Activated CD8-positive, alpha-beta T cell treated with anti-CD3 and anti-CD28 coated beads for 36 hours (primary cell): ENCODE measurements at regions of chr16 and their contacts with region 1.

Region 1: GRCh38 chr16:11255737-11256660 is at the start of gene SOCS1:
- DNase-seq: peak; percentile 87
- ATAC-seq: peak; percentile 65
- H3K4me3 Mint-ChIP-seq: peak within 1 kb of the TSS; percentile 97
- H3K27ac Mint-ChIP-seq: peak within 1 kb of the TSS; percentile 94
- H3K4me1 Mint-ChIP-seq: peaks cover 41% of the 10 kb centered on the region
- H3K27me3 Mint-ChIP-seq: no peaks in the 10 kb centered on the region
- CTCF ChIP-seq: peak; percentile 84
- total RNA-seq, gene SOCS1: 75.7 to 75.8 TPM

Region 2: GRCh38 chr16:10981697-10982216 is 274.2 kb before region 1 on chr16:
- CTCF ChIA-PET with region 1: interaction called, 10 read pairs
- POLR2A ChIA-PET with region 1: interaction called, 11 read pairs
- intact Hi-C with region 1: no loop called
- DNase-seq: peak; percentile 69
- ATAC-seq: peak; percentile 94
- H3K4me3 Mint-ChIP-seq: no peak overlapping the region
- H3K27ac Mint-ChIP-seq: no peak overlapping the region
- H3K4me1 Mint-ChIP-seq: peaks cover 16% of the 10 kb centered on the region
- H3K27me3 Mint-ChIP-seq: no peaks in the 10 kb centered on the region
- CTCF ChIP-seq: peak; percentile 55

Region 3: GRCh38 chr16:11094072-11094856 is 161.7 kb before region 1 on chr16:
- CTCF ChIA-PET with region 1: interaction called, 5 read pairs
- POLR2A ChIA-PET with region 1: interaction called, 147 read pairs
- intact Hi-C with region 1: loop called (anchors 5 kb)
- DNase-seq: peak; percentile 88
- ATAC-seq: peak; percentile 74
- H3K4me3 Mint-ChIP-seq: peak overlapping the region; percentile 46
- H3K27ac Mint-ChIP-seq: peak overlapping the region; percentile 97
- H3K4me1 Mint-ChIP-seq: peaks cover 67% of the 10 kb centered on the region
- H3K27me3 Mint-ChIP-seq: no peaks in the 10 kb centered on the region
- CTCF ChIP-seq: no peak

Region 4: DNA sequence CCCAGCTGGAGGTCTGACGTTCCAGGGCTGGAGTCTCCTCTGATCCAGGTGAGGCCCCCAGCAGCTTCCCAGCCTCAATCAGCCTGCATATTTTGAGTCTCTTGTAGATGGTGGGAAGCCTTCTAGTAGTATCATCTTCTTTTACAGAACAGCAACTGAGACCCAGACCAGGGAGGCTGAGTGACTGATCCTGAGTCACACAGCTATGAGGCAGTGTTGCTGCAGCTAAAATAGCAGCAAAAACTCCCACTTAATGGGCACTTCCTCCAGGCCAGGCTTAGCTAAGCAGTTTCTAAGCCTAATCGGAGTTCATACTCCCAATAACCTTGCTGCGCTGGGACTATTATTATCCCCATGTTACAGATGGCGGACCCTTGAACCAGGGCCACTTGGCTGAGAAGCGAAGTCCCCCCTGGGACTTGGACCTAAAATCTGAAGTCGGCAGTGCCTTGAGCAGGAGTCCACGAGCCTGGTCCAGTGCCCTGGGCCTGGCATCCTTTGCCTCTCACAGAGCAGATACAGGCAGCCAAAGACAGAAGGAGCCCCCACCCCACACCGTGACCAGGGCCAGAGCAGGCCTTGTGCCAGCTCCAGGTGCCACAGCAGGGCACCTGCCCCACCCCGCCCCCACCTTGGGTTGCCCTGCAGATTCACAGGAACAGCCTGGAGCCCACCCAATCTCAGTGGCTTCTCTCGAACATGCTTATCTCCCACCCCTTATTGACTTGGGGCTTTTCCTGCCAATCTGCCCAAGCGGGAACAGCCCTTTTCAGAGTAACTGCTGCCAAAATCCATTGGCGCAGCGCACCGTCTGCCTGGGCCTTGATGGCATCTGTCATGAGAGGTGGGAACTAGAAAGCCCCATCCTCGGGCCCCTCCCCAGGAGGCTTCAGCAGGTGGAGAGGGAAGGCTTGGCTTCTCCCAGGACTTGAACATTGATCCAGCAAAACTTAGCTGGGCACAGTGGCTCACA is 65.1 kb before region 1 on chr16:
- CTCF ChIA-PET with region 1: interaction called, 4 read pairs
- POLR2A ChIA-PET with region 1: interaction called, 12 read pairs
- intact Hi-C with region 1: no loop called
- DNase-seq: no peak
- ATAC-seq: peak; percentile 86
- H3K4me3 Mint-ChIP-seq: no peak overlapping the region
- H3K27ac Mint-ChIP-seq: peak overlapping the region; percentile 38
- H3K4me1 Mint-ChIP-seq: peaks cover 19% of the 10 kb centered on the region
- H3K27me3 Mint-ChIP-seq: no peaks in the 10 kb centered on the region
- CTCF ChIP-seq: no peak

Region 5: GRCh38 chr16:11297492-11298142 is 41.6 kb after region 1 on chr16:
- CTCF ChIA-PET with region 1: interaction called, 14 read pairs
- POLR2A ChIA-PET with region 1: interaction called, 26 read pairs
- intact Hi-C with region 1: no loop called
- DNase-seq: peak; percentile 85
- ATAC-seq: peak; percentile 83
- H3K4me3 Mint-ChIP-seq: peak overlapping the region; percentile 24
- H3K27ac Mint-ChIP-seq: peak overlapping the region; percentile 69
- H3K4me1 Mint-ChIP-seq: peaks cover 44% of the 10 kb centered on the region
- H3K27me3 Mint-ChIP-seq: peaks cover 7% of the 10 kb centered on the region
- CTCF ChIP-seq: no peak

Region 6: GRCh38 chr16:11356573-11357331 is 100.8 kb after region 1 on chr16:
- CTCF ChIA-PET with region 1: interaction called, 88 read pairs
- POLR2A ChIA-PET with region 1: interaction called, 57 read pairs
- intact Hi-C with region 1: loop called (anchors 2 kb)
- DNase-seq: peak; percentile 70
- ATAC-seq: no peak
- H3K4me3 Mint-ChIP-seq: no peak overlapping the region
- H3K27ac Mint-ChIP-seq: no peak overlapping the region
- H3K4me1 Mint-ChIP-seq: peaks cover 62% of the 10 kb centered on the region
- H3K27me3 Mint-ChIP-seq: peaks cover 13% of the 10 kb centered on the region
- CTCF ChIP-seq: peak; percentile 65